Endothelial cell of umbilical vein (primary cell): ENCODE measurements at regions of chr7 and their contacts with region 1.

Region 1: GRCh38 chr7:130400120-130400591 is 19.9 kb downstream of the CPA1 start:
- DNase-seq: peak; percentile 59
- H3K4me3 ChIP-seq: no peak overlapping the region
- H3K27ac ChIP-seq: no peak overlapping the region
- H3K4me1 ChIP-seq: peaks cover 4% of the 10 kb centered on the region
- H3K27me3 ChIP-seq: no peaks in the 10 kb centered on the region
- CTCF ChIP-seq: no peak
- POLR2A ChIP-seq: no peak

Region 2: DNA sequence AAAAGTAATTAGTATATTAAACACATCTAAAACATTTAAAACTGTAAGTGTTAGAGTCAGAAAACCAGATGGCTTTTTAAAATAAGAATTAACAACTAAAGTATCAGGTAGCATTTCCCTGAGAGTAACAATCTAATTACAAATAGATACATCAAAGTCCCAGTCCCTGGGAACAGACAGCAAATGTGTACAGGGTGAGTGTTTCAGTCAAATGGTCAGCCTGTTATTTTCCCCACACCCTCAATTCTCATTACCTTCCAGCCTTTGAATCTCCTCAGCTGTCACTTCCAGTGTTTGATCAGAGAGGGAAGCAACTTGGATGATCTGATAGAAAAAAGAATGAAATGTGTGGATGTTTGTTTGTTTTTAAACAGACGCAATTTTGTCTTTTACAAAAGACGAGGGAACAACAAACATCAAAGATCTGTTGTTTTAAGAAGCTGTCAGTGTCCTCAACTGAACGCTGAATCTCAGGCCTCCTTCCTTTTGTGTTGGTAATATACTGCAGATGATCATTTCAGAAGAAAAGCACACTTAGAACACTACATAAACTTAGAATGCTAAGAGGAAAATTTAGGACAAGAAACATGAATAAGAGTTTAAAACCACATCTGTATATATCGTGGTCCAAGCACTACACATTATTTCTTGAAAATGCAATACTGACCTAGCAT is 10.8 kb after region 1 on chr7:
- CTCF ChIA-PET with region 1: interaction called, 10 read pairs
- POLR2A ChIA-PET with region 1: no interaction called
- dilution Hi-C with region 1: no loop called
- intact Hi-C with region 1: no loop called
- DNase-seq: no peak
- H3K4me3 ChIP-seq: no peak overlapping the region
- H3K27ac ChIP-seq: no peak overlapping the region
- H3K4me1 ChIP-seq: no peaks in the 10 kb centered on the region
- H3K27me3 ChIP-seq: no peaks in the 10 kb centered on the region
- CTCF ChIP-seq: no peak
- POLR2A ChIP-seq: no peak